CD4-positive, alpha-beta T cell (primary cell): ENCODE measurements at regions of chr1 and their contacts with region 1.

Region 1: GRCh38 chr1:44775078-44775929 is at the start of gene RPS8:
- DNase-seq: peak; percentile 82 to 95 (median 86)
- ATAC-seq: peak; percentile 83
- H3K4me3 ChIP-seq: peak within 1 kb of the TSS; percentile 77
- H3K4me3 Mint-ChIP-seq: peak within 1 kb of the TSS; percentile 90
- H3K27ac ChIP-seq: peak within 1 kb of the TSS; percentile 91
- H3K27ac Mint-ChIP-seq: peak within 1 kb of the TSS; percentile 89
- H3K4me1 ChIP-seq: peaks cover 33% of the 10 kb centered on the region
- H3K4me1 Mint-ChIP-seq: peaks cover 54% of the 10 kb centered on the region
- H3K27me3 ChIP-seq: no peaks in the 10 kb centered on the region
- H3K27me3 Mint-ChIP-seq: no peaks in the 10 kb centered on the region
- CTCF ChIP-seq: no peak
- total RNA-seq, gene RPS8: 3,394 to 3,436 TPM

Region 2: GRCh38 chr1:44674113-44675000 is 100.9 kb before region 1 on chr1 and contains the starts of genes ARMH1 and TMEM53:
- CTCF ChIA-PET with region 1: no interaction called
- POLR2A ChIA-PET with region 1: interaction called, 3 read pairs
- intact Hi-C with region 1: loop called in 1 of 2 experiments (anchors 10 kb)
- DNase-seq: peak; percentile 91 to 99 (median 96)
- ATAC-seq: peak; percentile 90
- H3K4me3 ChIP-seq: peak within 1 kb of the TSS; percentile 86
- H3K4me3 Mint-ChIP-seq: peak within 1 kb of the TSS; percentile 93
- H3K27ac ChIP-seq: peak within 1 kb of the TSS; percentile 75 to 86
- H3K27ac Mint-ChIP-seq: peak within 1 kb of the TSS; percentile 84
- H3K4me1 ChIP-seq: peaks cover 31% of the 10 kb centered on the region
- H3K4me1 Mint-ChIP-seq: peaks cover 29% of the 10 kb centered on the region
- H3K27me3 ChIP-seq: no peaks in the 10 kb centered on the region
- H3K27me3 Mint-ChIP-seq: no peaks in the 10 kb centered on the region
- CTCF ChIP-seq: no peak
- total RNA-seq, gene ARMH1: 79.9 to 84.0 TPM
- total RNA-seq, gene TMEM53: 0.64 to 1.2 TPM

Region 3: GRCh38 chr1:44739361-44740178 is 35.7 kb before region 1 on chr1 and contains the start of gene KIF2C:
- CTCF ChIA-PET with region 1: no interaction called
- POLR2A ChIA-PET with region 1: interaction called, 12 read pairs
- intact Hi-C with region 1: loop called in 1 of 2 experiments (anchors 2 kb)
- DNase-seq: peak; percentile 94 to 98 (median 96)
- ATAC-seq: peak; percentile 100
- H3K4me3 ChIP-seq: peak within 1 kb of the TSS; percentile 66
- H3K4me3 Mint-ChIP-seq: peak within 1 kb of the TSS; percentile 98
- H3K27ac ChIP-seq: peak within 1 kb of the TSS; percentile 63 to 85
- H3K27ac Mint-ChIP-seq: peak within 1 kb of the TSS; percentile 97
- H3K4me1 ChIP-seq: peaks cover 8% of the 10 kb centered on the region
- H3K4me1 Mint-ChIP-seq: peaks cover 18% of the 10 kb centered on the region
- H3K27me3 ChIP-seq: no peaks in the 10 kb centered on the region
- H3K27me3 Mint-ChIP-seq: no peaks in the 10 kb centered on the region
- CTCF ChIP-seq: no peak
- total RNA-seq, gene KIF2C: 0.64 to 0.82 TPM

Region 4: DNA sequence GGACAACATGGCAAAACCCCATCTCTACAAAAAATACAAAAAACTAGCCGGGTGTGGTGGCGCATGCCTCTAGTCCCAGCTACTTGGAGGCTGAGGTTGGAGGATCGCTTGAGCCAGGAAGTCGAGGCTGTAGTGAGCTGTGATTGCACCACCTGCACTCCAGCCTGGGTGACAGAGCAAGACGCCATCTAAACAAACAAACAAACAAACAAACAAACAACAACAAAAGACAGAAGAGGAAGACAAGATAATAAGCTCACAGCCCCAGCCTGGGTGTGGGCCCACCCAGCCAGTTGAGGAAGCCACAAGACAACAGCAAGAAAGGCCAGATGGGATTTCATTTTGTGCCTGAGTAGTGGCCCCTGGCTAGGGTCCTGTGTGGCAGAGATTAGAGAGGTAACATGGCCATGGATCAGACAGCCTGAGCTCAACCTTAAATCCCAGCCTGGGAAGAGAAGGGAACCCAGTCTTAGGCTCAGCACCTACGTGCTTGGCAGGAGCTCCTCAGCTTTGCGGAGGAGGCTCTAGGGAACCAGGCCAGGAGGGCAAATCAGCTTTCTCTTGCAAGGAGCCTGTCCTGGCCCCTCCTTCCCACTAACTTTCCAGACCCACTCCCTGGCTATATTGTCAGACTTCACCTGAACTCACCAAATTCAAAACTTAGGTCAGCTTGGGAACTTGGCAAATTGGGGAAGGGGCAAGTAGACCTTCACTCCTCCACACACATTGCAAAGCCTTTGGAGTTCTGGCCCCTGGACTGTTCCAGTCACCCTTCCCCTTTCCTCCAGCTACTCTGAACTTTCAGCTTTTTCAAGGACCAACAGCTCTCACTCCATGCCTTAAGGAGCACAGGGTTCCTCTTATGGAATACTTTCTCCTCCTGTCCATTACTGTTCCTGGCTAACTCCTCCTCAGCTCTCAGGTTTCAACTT is 17.7 kb after region 1 on chr1:
- CTCF ChIA-PET with region 1: no interaction called
- POLR2A ChIA-PET with region 1: interaction called, 61 read pairs
- intact Hi-C with region 1: no loop called
- DNase-seq: no peak
- ATAC-seq: no peak
- H3K4me3 ChIP-seq: no peak overlapping the region
- H3K4me3 Mint-ChIP-seq: no peak overlapping the region
- H3K27ac ChIP-seq: no peak overlapping the region
- H3K27ac Mint-ChIP-seq: no peak overlapping the region
- H3K4me1 ChIP-seq: no peaks in the 10 kb centered on the region
- H3K4me1 Mint-ChIP-seq: peaks cover 4% of the 10 kb centered on the region
- H3K27me3 ChIP-seq: no peaks in the 10 kb centered on the region
- H3K27me3 Mint-ChIP-seq: no peaks in the 10 kb centered on the region
- CTCF ChIP-seq: no peak

Region 5: GRCh38 chr1:44812822-44813543 is 37.7 kb after region 1 on chr1:
- CTCF ChIA-PET with region 1: no interaction called
- POLR2A ChIA-PET with region 1: interaction called, 35 read pairs
- intact Hi-C with region 1: no loop called
- DNase-seq: peak in 2 of 14 experiments; percentile 16 to 50
- ATAC-seq: no peak
- H3K4me3 ChIP-seq: peak overlapping the region; percentile 57
- H3K4me3 Mint-ChIP-seq: peak overlapping the region; percentile 83
- H3K27ac ChIP-seq: peak overlapping the region; percentile 55 to 74
- H3K27ac Mint-ChIP-seq: peak overlapping the region; percentile 99
- H3K4me1 ChIP-seq: peaks cover 68% of the 10 kb centered on the region
- H3K4me1 Mint-ChIP-seq: peaks cover 70% of the 10 kb centered on the region
- H3K27me3 ChIP-seq: no peaks in the 10 kb centered on the region
- H3K27me3 Mint-ChIP-seq: peaks cover 4% of the 10 kb centered on the region
- CTCF ChIP-seq: no peak

Region 6: GRCh38 chr1:45291716-45292115 is 516.4 kb after region 1 on chr1:
- CTCF ChIA-PET with region 1: no interaction called
- POLR2A ChIA-PET with region 1: no interaction called
- intact Hi-C with region 1: no loop called
- DNase-seq: no peak
- ATAC-seq: no peak
- H3K4me3 ChIP-seq: no peak overlapping the region
- H3K4me3 Mint-ChIP-seq: no peak overlapping the region
- H3K27ac ChIP-seq: no peak overlapping the region
- H3K27ac Mint-ChIP-seq: no peak overlapping the region
- H3K4me1 ChIP-seq: no peaks in the 10 kb centered on the region
- H3K4me1 Mint-ChIP-seq: no peaks in the 10 kb centered on the region
- H3K27me3 ChIP-seq: no peaks in the 10 kb centered on the region
- H3K27me3 Mint-ChIP-seq: no peaks in the 10 kb centered on the region
- CTCF ChIP-seq: no peak

Region 7: GRCh38 chr1:45490626-45491486 is 715.6 kb after region 1 on chr1 and contains the start of gene TESK2:
- CTCF ChIA-PET with region 1: no interaction called
- POLR2A ChIA-PET with region 1: interaction called, 4 read pairs
- intact Hi-C with region 1: loop called in 1 of 2 experiments (anchors 10 kb)
- DNase-seq: peak; percentile 92 to 100 (median 95)
- ATAC-seq: peak; percentile 92
- H3K4me3 ChIP-seq: peak within 1 kb of the TSS; percentile 82
- H3K4me3 Mint-ChIP-seq: no peak within 1 kb of the TSS
- H3K27ac ChIP-seq: peak within 1 kb of the TSS; percentile 55 to 70
- H3K27ac Mint-ChIP-seq: no peak within 1 kb of the TSS
- H3K4me1 ChIP-seq: peaks cover 28% of the 10 kb centered on the region
- H3K4me1 Mint-ChIP-seq: peaks cover 5% of the 10 kb centered on the region
- H3K27me3 ChIP-seq: no peaks in the 10 kb centered on the region
- H3K27me3 Mint-ChIP-seq: no peaks in the 10 kb centered on the region
- CTCF ChIP-seq: no peak
- total RNA-seq, gene TESK2: 2.8 to 3.4 TPM